Aorta (tissue), 5 donors: ENCODE measurements at regions of chr9 and their contacts with region 1.

Region 1: GRCh38 chr9:97598461-97599288 is 34.5 kb downstream of the TSTD2 start:
- DNase-seq: peak in 1 of 2 donors; percentile 76
- ATAC-seq: peak; percentile 84
- H3K4me3 ChIP-seq: no peak overlapping the region
- H3K27ac ChIP-seq: no peak overlapping the region
- H3K4me1 ChIP-seq: peaks cover 0 to 5% of the 10 kb centered on the region in 2 donors
- H3K27me3 ChIP-seq: no peaks in the 10 kb centered on the region

Region 2: DNA sequence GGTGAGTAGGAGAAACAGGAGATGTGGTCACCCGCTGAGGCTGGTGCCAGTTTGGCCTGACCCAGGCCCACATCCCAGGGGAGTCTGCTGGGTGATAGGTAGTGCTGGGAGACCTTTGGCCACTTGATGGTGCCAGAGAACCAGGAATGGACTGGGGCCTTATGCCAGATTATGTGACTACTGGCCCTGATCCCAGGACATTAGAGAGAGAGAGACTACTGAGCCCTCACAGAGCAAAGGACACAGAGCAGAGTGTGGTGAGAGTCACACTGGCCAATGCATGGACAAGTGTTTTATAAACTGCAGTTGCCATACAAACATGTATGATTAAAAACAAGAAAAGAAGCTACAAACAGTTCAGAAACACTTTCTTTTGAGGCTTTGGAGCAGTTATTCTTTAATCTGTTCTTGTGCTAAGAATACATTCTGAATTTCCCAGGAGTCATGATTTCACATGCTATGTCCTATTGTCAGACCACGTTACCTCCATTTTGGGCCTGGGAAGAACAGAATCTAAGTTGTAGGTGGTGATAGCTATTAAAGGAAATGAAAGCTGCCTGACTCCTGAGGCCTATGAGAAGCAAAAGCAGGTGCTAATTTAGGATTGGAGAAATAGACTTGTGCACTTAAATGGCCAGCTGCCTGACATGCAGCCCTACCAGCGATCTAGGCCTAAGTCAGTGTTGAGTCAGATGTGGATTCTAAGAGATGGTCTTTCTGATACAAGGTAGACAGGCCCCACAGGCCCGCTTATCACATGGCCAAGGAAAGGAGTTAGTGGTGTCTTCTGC is 129.8 kb before region 1 on chr9:
- intact Hi-C with region 1: loop called (anchors 2 to 5 kb)
- DNase-seq: peak; percentile 74 to 88
- ATAC-seq: peak; percentile 97
- H3K4me3 ChIP-seq: no peak overlapping the region
- H3K27ac ChIP-seq: peak overlapping the region in 1 of 2 donors; percentile 69
- H3K4me1 ChIP-seq: peaks cover 0 to 2% of the 10 kb centered on the region in 2 donors
- H3K27me3 ChIP-seq: no peaks in the 10 kb centered on the region

Region 3: GRCh38 chr9:97501177-97501971 is 97.3 kb before region 1 on chr9 and contains the start of gene TMOD1:
- intact Hi-C with region 1: loop called (anchors 2 to 10 kb)
- DNase-seq: peak; percentile 73 to 93
- ATAC-seq: peak; percentile 77
- H3K4me3 ChIP-seq: peak within 1 kb of the TSS; percentile 71 to 100
- H3K27ac ChIP-seq: peak within 1 kb of the TSS; percentile 3 to 52
- H3K4me1 ChIP-seq: peaks cover 0 to 5% of the 10 kb centered on the region in 2 donors
- H3K27me3 ChIP-seq: no peaks in the 10 kb centered on the region
- total RNA-seq, gene TMOD1: 24.5 to 56.6 TPM

Region 4: DNA sequence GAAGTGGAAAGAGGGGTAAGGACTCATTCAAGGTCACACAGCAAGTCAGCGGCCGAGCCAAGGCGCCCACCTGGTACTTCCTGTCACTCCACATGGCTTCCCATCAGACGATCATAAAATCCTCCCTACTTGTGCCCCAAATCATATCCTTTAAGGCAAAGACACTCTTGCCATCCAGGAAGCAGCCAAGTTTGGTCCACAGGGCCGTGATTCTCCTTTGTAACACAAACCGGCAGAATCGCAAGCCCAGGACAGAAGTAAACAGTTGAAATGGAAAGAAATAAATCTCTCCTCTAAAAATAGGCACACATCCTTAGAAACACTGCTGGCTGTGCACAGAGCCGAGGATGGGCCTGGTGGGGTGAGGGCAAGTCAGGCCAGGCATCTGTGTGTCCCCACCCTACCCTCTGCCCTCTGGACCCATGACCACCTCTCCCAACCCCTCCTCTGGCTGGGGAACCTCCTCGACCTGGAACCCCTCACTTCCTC is 66.7 kb before region 1 on chr9:
- intact Hi-C with region 1: no loop called
- DNase-seq: no peak
- ATAC-seq: peak; percentile 16
- H3K4me3 ChIP-seq: no peak overlapping the region
- H3K27ac ChIP-seq: no peak overlapping the region
- H3K4me1 ChIP-seq: no peaks in the 10 kb centered on the region
- H3K27me3 ChIP-seq: no peaks in the 10 kb centered on the region

Region 5: DNA sequence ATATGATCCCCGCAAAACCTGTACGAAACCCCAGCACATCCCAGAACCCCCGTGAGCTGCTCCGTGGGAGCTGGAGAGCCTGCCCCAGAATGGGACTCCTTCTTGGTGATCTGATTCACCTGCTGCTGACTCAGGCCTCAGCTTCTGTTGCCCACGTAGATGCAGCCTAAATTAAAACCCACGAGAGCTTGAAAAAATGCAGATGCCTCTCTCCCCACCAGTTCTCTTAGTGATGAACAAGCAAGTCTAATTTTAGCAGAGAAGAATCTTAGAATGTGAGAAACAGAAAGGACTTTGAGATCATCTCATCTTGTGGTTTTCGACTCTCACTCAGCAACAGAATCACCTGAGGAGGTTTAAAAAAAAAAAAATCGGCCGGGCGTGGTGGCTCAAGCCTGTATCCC is 39.6 kb before region 1 on chr9:
- intact Hi-C with region 1: loop called in 1 of 2 experiments (anchors 5 kb)
- DNase-seq: no peak
- ATAC-seq: no peak
- H3K4me3 ChIP-seq: no peak overlapping the region
- H3K27ac ChIP-seq: peak overlapping the region in 1 of 2 donors; percentile 35
- H3K4me1 ChIP-seq: peaks cover 0 to 7% of the 10 kb centered on the region in 2 donors
- H3K27me3 ChIP-seq: no peaks in the 10 kb centered on the region

Region 6: GRCh38 chr9:97696803-97697601 is 98.3 kb after region 1 on chr9 and contains the start of gene XPA:
- intact Hi-C with region 1: no loop called
- DNase-seq: peak; percentile 98 to 99
- ATAC-seq: peak; percentile 100
- H3K4me3 ChIP-seq: peak within 1 kb of the TSS; percentile 56 to 93
- H3K27ac ChIP-seq: peak within 1 kb of the TSS; percentile 7 to 95
- H3K4me1 ChIP-seq: peaks cover 0 to 6% of the 10 kb centered on the region in 2 donors
- H3K27me3 ChIP-seq: no peaks in the 10 kb centered on the region
- total RNA-seq, gene XPA: 15.3 to 23.4 TPM